Dorsolateral prefrontal cortex (tissue), 120 donors: ENCODE measurements at regions of chr1 and their contacts with region 1.

Region 1: DNA sequence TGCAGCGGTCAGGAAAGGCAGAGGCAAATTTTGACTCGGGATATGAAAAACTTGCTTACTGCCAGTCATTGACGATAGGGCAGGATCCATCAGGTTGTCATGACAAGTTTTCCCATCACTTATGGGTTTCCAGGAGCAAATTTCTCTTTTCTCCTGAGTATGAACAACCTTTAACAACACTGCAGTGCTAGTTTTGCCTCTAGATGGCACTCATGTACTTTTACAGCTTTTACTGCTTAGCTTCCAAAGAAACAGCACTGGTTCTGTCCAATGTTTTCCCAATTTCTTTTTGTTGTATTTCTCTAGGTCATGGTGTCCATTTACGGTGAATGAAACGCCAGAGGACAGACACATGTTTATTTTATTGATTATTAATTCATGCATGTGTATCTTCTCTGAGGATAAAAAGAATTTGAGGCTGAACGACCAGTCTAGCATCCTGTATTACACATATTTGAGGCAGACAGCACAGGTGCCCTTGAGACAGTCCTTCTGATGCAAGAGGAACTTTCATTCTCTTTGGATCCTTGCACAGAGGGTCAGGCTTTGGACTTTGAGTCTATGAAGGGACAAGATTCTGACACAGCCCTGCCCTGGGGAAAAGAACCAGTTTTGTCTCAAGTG is 112.3 kb upstream of the TRABD2B start:
- DNase-seq: peak in 1 of 10 donors; percentile 17
- H3K4me3 ChIP-seq: no peak overlapping the region
- H3K27ac ChIP-seq: no peak overlapping the region
- H3K27me3 ChIP-seq: peaks cover 0 to 7% (median 0%) of the 10 kb centered on the region in 45 donors
- CTCF ChIP-seq: peak; percentile 34 to 97 (median 83)

Region 2: GRCh38 chr1:48177257-48177656 is 67.8 kb after region 1 on chr1:
- intact Hi-C with region 1: no loop called
- DNase-seq: no peak
- H3K4me3 ChIP-seq: no peak overlapping the region
- H3K27ac ChIP-seq: no peak overlapping the region
- H3K27me3 ChIP-seq: peaks cover 0 to 8% (median 0%) of the 10 kb centered on the region in 45 donors
- CTCF ChIP-seq: no peak

Region 3: GRCh38 chr1:48196237-48196636 is 86.7 kb after region 1 on chr1:
- intact Hi-C with region 1: loop called (anchors 2 to 5 kb)
- DNase-seq: no peak
- H3K4me3 ChIP-seq: no peak overlapping the region
- H3K27ac ChIP-seq: no peak overlapping the region
- H3K27me3 ChIP-seq: peaks cover 0 to 4% (median 0%) of the 10 kb centered on the region in 45 donors
- CTCF ChIP-seq: no peak

Region 4: GRCh38 chr1:48202030-48202752 is 92.7 kb after region 1 on chr1:
- intact Hi-C with region 1: loop called (anchors 2 to 5 kb)
- DNase-seq: peak in 9 of 10 donors; percentile 52 to 84 (median 65)
- H3K4me3 ChIP-seq: no peak overlapping the region
- H3K27ac ChIP-seq: no peak overlapping the region
- H3K27me3 ChIP-seq: no peaks in the 10 kb centered on the region
- CTCF ChIP-seq: peak; percentile 74 to 96 (median 90)

Region 5: DNA sequence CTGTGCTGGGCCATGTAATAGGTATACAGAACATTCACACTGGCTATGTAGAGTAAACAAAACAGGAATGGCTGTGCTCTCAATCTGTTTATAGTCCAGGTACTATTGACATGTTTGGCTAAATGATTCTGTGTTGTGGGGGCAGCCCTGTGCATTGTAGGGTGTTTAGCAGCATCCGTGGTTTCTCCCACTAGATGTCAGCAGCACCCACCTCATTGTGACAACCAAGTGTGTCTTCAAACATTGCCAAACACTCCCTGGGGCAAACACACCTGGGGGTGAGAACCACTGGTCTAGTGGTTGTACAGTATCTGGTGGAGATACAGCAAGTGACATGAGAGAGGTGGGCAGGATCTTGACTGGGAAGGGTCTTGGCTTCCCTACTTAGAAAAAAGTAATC is 442.9 kb after region 1 on chr1:
- intact Hi-C with region 1: no loop called
- DNase-seq: peak in 6 of 10 donors; percentile 16 to 51 (median 44)
- H3K4me3 ChIP-seq: no peak overlapping the region
- H3K27ac ChIP-seq: peak overlapping the region in 10 of 59 donors; percentile 14 to 66 (median 33)
- H3K27me3 ChIP-seq: no peaks in the 10 kb centered on the region
- CTCF ChIP-seq: peak in 51 of 56 donors; percentile 12 to 58 (median 36)